Right cardiac atrium (tissue), 5 donors: ENCODE measurements at regions of chrX and their contacts with region 1.

Region 1: GRCh38 chrX:53317365-53318069 is 36.1 kb upstream of the IQSEC2 start:
- DNase-seq: peak; percentile 66 to 86 (median 86)
- ATAC-seq: peak; percentile 74 to 80
- H3K4me3 ChIP-seq: no peak overlapping the region
- H3K27ac ChIP-seq: no peak overlapping the region
- H3K4me1 ChIP-seq: no peaks in the 10 kb centered on the region
- H3K27me3 ChIP-seq: no peaks in the 10 kb centered on the region

Region 2: DNA sequence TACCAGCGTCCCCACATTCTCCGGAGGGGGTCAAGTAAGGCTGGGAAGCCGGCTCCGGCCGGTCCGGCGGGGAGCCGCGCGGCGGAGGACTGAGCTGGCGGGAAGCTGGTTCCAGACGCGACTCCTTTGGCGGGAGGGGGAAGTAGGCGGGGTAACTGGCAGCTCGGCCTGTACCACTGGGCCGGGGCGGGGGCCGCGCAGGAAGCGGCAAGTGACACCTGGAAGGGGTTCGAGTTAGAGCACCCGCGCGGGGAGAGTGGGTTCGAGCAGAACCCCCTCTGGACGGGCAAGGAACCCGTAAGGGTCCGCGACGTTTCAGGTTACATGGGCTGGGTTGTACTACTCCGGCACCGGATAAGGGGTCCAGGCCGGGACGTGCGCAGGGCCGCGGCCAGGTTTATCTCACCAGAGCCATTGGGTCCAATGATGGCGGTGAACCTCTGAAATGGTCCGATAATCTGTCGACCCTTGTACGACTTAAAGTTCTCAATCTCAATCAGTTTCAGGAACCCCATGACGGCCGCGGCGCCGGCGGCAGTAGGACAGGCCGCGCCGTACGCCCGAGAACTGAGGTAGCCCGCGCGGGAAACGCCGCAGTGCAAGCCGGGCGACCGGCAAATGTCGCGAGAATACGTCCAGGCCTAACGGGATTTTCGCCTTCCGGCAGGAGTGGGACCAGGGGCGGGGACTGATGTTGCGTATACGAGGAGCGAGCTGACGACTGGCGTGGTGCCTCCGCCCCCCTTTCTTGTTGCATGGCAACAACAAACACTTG is 104.8 kb after region 1 on chrX and contains the start of gene SMC1A:
- intact Hi-C with region 1: no loop called
- DNase-seq: peak; percentile 98 to 99 (median 99)
- ATAC-seq: peak; percentile 98
- H3K4me3 ChIP-seq: peak within 1 kb of the TSS; percentile 59
- H3K27ac ChIP-seq: peak within 1 kb of the TSS; percentile 74
- H3K4me1 ChIP-seq: peaks cover 5% of the 10 kb centered on the region
- H3K27me3 ChIP-seq: no peaks in the 10 kb centered on the region
- total RNA-seq, gene SMC1A: 41.9 to 50.3 (median 49.2) TPM

Region 3: DNA sequence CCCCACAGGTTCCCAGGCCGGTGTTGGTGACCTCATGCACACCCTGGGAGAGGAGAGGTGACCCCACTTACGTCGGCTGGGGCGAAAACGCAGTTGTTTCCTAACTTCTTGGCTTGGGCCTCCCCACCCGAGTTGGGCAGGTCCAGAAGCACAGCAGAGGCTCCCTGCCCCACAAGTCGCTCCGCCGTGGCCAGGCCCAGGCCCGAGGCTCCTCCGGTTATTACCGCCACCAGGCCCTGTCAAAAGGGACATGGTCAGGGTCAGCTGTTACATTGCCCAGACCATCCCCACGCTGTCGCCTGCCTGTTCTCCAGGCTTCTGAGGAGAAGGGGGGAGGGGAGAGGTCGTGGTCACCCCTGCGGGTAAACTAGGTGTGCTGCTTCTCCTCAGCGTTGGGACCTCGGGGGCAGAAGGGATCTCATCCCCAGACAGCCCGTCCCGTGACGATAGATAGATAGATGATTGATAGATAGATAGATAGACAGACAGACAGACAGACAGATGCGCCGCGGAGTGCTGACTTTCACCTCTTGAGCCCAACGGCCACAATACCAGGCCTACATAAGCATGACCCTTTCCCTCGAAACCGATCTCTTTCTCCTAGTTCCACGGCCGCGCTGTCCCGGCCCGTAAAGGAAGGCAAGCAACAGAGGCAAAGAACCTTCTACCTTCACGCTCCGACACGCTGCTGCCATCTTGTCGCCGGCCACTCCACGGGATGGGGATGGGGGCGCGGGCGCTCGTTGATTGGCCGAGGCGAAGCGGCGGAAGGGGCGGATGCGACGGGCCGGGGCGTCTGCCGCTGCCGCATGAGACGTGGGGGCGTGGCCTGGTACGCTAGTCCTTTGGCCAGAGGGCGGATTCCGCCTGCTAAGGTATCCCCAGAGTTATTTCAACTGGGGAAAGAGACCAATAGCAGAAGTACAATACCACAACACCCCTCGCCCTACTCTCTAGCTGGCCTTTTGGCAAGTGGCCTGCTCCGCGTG is 116.4 kb after region 1 on chrX and contains the start of gene HSD17B10:
- intact Hi-C with region 1: loop called in 2 of 4 experiments (anchors 5 to 10 kb)
- DNase-seq: peak; percentile 93 to 96 (median 95)
- ATAC-seq: peak; percentile 98
- H3K4me3 ChIP-seq: peak within 1 kb of the TSS; percentile 54
- H3K27ac ChIP-seq: peak within 1 kb of the TSS; percentile 43
- H3K4me1 ChIP-seq: no peaks in the 10 kb centered on the region
- H3K27me3 ChIP-seq: no peaks in the 10 kb centered on the region
- total RNA-seq, gene HSD17B10: 89.3 to 113 (median 106) TPM